Activated naive CD4-positive, alpha-beta T cell treated with anti-CD3 and anti-CD28 coated beads for 36 hours (primary cell): ENCODE measurements at regions of chr18 and their contacts with region 1.

Region 1: DNA sequence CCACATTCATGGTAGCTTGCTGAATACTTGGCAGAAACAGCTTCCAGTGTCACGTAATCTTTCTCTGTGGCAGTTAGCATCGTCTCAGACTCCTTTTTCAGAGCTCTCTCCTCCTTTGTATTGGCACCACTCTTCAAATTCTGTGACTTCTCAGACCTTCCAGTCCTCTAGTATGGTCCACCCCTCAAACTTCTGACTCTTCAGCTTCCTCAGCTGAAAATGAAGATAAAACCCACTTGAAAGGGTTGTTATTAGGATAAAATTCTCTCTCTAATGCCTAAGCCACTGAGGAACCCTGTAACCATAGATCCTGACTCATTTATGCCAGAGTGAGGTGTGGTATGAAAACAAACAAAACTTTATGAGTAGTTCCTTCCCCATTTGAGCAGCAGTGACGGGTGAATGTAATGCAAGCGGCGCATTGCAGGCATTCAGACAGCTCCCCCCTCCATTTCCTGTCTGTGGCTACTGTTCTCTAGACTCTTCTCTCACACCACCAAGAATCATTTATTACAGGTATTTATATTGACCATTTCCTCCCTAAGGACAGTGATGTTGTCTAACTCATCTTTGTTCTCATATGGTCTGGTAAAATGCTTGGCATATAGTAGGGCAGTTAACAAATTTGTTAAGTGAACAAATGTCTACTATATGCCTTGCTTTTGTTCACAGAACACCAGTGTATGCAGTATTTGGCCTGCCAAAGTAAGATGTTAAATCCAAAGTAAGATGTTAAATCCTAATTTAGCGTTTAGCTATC is 35.3 kb downstream of the GALNT1 start:
- DNase-seq: peak; percentile 86
- H3K4me3 Mint-ChIP-seq: no peak overlapping the region
- H3K27ac Mint-ChIP-seq: no peak overlapping the region
- H3K4me1 Mint-ChIP-seq: peaks cover 22% of the 10 kb centered on the region
- H3K27me3 Mint-ChIP-seq: no peaks in the 10 kb centered on the region

Region 2: DNA sequence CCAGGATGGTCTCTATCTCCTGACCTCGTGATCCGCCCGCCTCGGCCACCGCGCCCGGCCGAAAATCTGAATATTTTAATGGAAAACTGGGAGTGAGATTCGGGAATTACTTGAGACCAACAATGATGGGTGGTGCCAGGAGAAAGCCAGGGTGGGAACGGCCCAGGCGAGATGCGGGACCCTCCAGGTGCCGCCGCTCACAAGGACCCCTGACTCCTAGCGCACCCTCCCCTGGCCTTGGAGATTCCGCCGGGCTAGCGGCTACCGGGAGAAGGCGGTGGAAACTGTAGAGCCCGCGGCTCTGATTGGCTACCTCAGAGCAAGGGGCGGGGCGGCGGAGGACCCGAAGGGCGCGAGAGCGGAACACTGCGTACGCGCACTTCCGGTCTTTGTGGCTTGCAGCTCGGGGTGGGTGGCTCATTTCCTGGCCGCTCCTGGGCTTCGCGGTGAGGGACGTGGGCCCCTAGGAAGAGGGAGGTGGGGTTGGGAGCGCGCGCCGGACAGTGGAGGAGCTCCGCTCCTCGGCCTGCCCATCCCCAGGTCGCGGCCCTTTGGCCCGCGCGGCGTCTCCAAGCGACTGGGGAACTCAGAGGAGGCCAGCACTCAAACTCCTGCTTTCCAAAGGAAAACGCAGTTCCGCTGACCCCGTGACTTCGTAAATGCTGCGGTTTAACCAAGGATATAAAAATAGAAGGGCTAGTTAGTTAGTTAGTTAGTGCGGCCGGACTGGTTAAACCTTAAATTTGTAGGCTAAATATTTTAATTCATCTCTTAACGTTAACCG is 376.0 kb before region 1 on chr18 and contains the start of gene ZNF397:
- CTCF ChIA-PET with region 1: no interaction called
- intact Hi-C with region 1: loop called (anchors 2 kb)
- DNase-seq: peak; percentile 98
- H3K4me3 Mint-ChIP-seq: peak within 1 kb of the TSS; percentile 94
- H3K27ac Mint-ChIP-seq: peak within 1 kb of the TSS; percentile 99
- H3K4me1 Mint-ChIP-seq: peaks cover 38% of the 10 kb centered on the region
- H3K27me3 Mint-ChIP-seq: no peaks in the 10 kb centered on the region
- total RNA-seq, gene ZNF397: 22.6 to 23.2 TPM

Region 3: DNA sequence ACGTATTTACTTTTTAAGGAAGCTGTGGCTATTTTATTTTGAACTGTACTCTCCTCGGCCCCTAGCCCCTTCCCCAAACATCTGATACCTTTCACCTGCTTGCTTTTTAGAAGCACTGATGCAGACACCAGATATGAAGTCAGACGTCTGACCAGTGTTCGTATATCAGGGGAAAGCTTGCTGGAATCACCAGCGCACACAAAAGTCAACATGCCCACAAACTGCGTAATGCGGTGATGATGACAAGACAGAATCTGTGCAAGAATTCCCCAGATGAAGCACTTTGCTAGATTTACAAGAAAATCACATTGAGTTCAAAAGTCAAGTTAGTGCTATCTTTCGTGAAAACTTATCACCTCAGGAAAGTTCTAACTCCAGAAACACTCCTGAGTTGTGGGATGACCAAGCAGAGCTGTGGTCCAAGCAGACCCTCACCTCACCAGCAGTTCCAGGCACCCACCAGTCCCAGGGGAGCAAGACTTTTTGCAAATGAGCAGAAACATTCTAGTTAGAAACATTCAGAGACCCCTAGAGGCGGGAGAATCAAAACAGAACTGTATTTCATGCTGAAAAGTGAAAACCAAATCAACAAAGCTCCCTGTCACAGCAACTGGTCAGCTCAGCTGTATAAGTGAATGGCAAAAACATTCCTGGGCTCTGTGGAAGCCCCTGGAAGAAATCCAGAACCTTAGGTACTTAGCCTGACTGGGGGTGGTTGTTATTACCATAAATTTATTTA is 174.8 kb before region 1 on chr18:
- CTCF ChIA-PET with region 1: no interaction called
- intact Hi-C with region 1: no loop called
- DNase-seq: no peak
- H3K4me3 Mint-ChIP-seq: no peak overlapping the region
- H3K27ac Mint-ChIP-seq: no peak overlapping the region
- H3K4me1 Mint-ChIP-seq: no peaks in the 10 kb centered on the region
- H3K27me3 Mint-ChIP-seq: peaks cover 3% of the 10 kb centered on the region

Region 4: DNA sequence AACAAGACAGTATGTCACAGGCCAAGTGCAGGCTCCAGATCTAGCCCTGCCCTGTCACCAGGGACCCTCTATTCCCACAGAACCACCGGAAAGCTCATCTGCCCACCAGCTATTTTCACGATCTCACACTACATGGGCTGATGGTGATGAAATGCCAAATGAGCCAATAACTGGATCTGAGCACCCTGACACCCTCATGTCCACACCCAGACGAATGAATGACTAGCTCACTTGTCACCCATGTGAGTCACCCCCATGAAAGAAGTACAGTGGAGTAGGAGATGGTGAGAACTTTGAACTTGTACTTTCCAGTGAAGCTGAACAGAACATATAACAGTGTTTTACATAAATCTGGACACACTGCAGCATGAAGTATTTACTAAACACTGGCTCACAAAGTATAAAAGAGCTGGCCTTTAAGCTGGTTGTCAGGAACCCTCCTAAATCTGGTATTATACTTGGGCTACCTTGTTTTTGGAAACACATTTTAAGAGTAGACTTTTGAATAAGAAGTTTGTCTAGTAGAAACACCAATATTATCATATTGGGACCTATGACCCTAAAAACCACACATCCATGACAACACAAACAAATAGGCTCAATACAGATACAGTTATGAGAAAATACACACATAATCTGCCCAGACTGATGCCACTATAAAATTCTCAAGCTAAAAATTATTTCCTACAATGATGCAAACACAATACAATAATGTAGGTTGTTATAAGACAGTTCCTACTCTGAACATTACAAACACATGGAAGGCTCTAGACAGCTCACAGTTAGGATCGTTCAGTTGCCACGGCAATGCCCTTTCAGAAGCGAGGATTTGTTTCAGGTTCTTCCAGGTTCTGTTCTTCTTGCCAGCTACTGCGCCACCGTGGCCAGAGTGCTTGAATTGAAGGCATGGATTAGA is 138.1 kb before region 1 on chr18:
- CTCF ChIA-PET with region 1: no interaction called
- intact Hi-C with region 1: loop called (anchors 1 kb)
- DNase-seq: peak; percentile 68
- H3K4me3 Mint-ChIP-seq: peak overlapping the region; percentile 0
- H3K27ac Mint-ChIP-seq: peak overlapping the region; percentile 9
- H3K4me1 Mint-ChIP-seq: peaks cover 43% of the 10 kb centered on the region
- H3K27me3 Mint-ChIP-seq: no peaks in the 10 kb centered on the region

Region 5: GRCh38 chr18:35605686-35606417 is 11.0 kb before region 1 on chr18:
- CTCF ChIA-PET with region 1: interaction called, 3 read pairs
- intact Hi-C with region 1: loop called (anchors 1 kb)
- DNase-seq: peak; percentile 37
- H3K4me3 Mint-ChIP-seq: no peak overlapping the region
- H3K27ac Mint-ChIP-seq: peak overlapping the region; percentile 31
- H3K4me1 Mint-ChIP-seq: peaks cover 34% of the 10 kb centered on the region
- H3K27me3 Mint-ChIP-seq: no peaks in the 10 kb centered on the region

Region 6: DNA sequence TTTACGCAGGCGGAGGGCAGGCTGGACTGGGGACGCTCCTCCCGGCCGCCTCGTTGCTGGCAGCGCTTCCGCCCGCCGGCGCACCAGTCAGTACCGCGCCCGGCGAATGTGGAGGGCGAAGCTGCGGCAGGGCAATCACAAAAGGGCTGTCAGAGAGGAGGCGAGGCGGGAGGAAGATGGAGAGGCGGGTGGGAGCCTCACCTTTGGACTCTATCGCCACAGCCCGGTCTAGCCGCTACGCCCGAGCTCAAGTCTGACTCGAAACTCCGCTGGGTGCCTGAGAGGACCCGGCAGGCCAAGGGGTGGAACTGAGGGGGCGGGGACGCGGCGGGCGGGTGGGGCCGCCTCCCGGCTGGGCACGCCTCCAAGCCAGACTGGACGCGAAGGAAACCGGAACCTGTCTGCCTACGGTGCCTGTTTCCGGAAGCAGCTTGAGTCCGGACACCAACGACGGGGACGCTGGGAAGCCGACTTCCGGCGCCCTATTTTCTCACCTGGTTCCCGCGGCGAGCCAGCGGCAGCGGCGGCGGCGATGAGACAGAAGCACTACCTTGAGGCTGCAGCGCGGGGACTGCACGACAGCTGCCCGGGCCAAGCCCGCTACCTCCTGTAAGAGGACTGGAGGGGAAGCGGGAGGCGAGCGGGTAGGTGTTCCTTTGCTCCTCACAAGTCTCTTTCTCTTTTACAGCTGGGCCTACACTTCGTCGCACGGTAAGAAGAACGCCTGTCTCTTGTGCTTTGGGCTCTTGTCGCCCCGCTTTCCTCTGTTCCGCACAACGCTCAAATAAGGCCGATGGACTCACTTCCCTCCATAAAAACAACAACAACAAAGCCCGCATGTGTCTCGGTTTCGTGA is 355.6 kb after region 1 on chr18 and contains the start of gene RMP24:
- CTCF ChIA-PET with region 1: no interaction called
- intact Hi-C with region 1: loop called (anchors 2 kb)
- DNase-seq: peak; percentile 96
- H3K4me3 Mint-ChIP-seq: peak within 1 kb of the TSS; percentile 97
- H3K27ac Mint-ChIP-seq: peak within 1 kb of the TSS; percentile 96
- H3K4me1 Mint-ChIP-seq: peaks cover 48% of the 10 kb centered on the region
- H3K27me3 Mint-ChIP-seq: no peaks in the 10 kb centered on the region